ENCODE measurements at regions of chr6 and their contacts with region 1.

Region 1: GRCh38 chr6:27188885-27189418 is 58.5 kb upstream of the PRSS16 start:
- DNase-seq: peak in 1 of 2 donors; percentile 59
- ATAC-seq: peak; percentile 88 to 97 (median 93)
- H3K4me3 ChIP-seq: peak overlapping the region; percentile 38 to 73 (median 64)
- H3K27ac ChIP-seq: peak overlapping the region in 9 of 10 donors; percentile 49 to 80 (median 63)
- H3K4me1 ChIP-seq: peaks cover 0 to 12% (median 4%) of the 10 kb centered on the region in 9 donors
- H3K27me3 ChIP-seq: peaks cover 0 to 10% (median 0%) of the 10 kb centered on the region in 7 donors
- CTCF ChIP-seq: peak; percentile 70 to 87 (median 79)

Region 2: DNA sequence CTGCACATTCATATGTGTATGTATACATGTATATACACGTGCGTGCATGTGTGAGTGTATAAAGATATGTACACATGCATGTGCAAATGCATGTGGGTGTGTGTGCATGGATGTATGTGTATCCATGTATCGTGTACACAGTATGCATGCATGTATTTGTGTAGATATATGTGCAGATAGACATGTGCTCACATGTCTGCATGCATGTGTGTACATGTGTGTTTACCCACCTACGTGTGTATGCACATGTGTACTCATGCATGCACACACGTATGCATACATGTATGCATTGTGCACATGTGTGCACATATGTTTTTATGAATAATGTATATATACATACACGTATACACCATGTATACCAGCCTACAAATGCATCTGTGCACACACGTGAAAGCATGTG is 449.1 kb before region 1 on chr6:
- intact Hi-C with region 1: no loop called
- DNase-seq: no peak
- ATAC-seq: no peak
- H3K4me3 ChIP-seq: no peak overlapping the region
- H3K27ac ChIP-seq: no peak overlapping the region
- H3K4me1 ChIP-seq: no peaks in the 10 kb centered on the region
- H3K27me3 ChIP-seq: peaks cover 0 to 37% (median 29%) of the 10 kb centered on the region in 7 donors
- CTCF ChIP-seq: no peak

Region 3: DNA sequence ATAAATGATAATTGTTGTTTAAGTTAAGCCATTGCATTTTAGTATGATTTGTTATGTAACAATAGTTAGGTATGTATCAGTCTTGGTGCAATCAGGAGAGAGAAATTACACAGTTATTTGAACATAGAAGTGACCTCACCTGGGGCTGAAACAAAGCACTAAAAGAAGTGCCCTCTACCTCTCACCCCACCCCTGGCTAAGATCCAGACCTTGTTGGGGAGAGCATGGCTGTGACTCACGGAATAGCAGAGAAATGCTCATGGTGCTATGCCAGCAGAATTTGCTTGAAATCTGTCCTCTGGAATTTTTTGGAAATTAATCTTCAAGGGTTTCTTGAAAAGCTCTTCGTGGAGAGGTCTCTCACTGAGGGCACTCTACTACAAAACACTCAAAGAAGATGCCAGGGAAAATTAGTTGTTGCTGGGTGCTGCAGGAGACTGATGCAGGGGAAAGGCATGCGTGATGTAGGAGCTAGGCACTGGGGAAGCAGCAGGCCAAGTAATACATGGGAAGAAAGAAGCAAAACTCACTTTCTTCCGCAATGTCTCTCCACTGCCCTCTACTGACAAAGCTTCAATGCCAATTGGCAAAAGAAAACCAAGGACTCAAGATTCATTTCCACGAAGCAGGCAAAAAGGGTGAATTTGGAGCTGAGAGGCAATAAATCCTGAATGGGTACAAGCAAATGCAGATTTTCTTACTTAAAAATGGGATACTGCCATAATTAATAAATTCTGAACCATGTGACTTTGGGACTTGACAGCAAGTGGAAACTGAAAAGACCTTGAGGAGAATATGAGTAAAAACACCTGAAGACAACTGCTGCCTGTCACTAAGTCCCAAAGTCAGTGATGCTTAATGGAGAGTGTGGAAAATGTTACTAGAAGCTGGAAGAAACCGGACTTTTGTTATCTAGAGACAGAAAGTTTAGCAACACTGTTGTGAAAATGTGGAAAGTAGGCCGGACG is 420.2 kb after region 1 on chr6:
- intact Hi-C with region 1: loop called in 1 of 10 experiments (anchors 10 kb)
- DNase-seq: no peak
- ATAC-seq: no peak
- H3K4me3 ChIP-seq: no peak overlapping the region
- H3K27ac ChIP-seq: no peak overlapping the region
- H3K4me1 ChIP-seq: no peaks in the 10 kb centered on the region
- H3K27me3 ChIP-seq: peaks cover 0 to 93% (median 68%) of the 10 kb centered on the region in 7 donors
- CTCF ChIP-seq: peak in 5 of 9 donors; percentile 21 to 56 (median 27)

Region 4: GRCh38 chr6:27791182-27791943 is 602.4 kb after region 1 on chr6:
- intact Hi-C with region 1: loop called in 1 of 10 experiments (anchors 1 kb)
- DNase-seq: peak in 1 of 2 donors; percentile 64
- ATAC-seq: peak; percentile 59 to 89 (median 74)
- H3K4me3 ChIP-seq: peak overlapping the region; percentile 34 to 60 (median 51)
- H3K27ac ChIP-seq: peak overlapping the region in 2 of 10 donors; percentile 22 to 23
- H3K4me1 ChIP-seq: peaks cover 0 to 26% (median 10%) of the 10 kb centered on the region in 9 donors
- H3K27me3 ChIP-seq: peaks cover 0 to 45% (median 28%) of the 10 kb centered on the region in 7 donors
- CTCF ChIP-seq: no peak

Measured in heart right ventricle (tissue), 16 donors.